Activated T-helper 2 cell treated with anti-CD3 and anti-CD28 coated beads, Interferon-gamma antibody, Interleukin-2, Interleukin-4, amounts not matched to agents 10 μg/mL and 5 μg/mL and 100 μg/mL, durations not matched to agents 14 hours and 24 hours and 36 hours (primary cell): ENCODE measurements at regions of chr18 and their contacts with region 1.

Region 1: GRCh38 chr18:36015629-36016028 is 43.1 kb downstream of the RMP24 start:
- DNase-seq: no peak
- H3K4me3 Mint-ChIP-seq: no peak overlapping the region
- H3K27ac Mint-ChIP-seq: no peak overlapping the region
- H3K4me1 Mint-ChIP-seq: no peaks in the 10 kb centered on the region
- H3K27me3 Mint-ChIP-seq: no peaks in the 10 kb centered on the region

Region 2: DNA sequence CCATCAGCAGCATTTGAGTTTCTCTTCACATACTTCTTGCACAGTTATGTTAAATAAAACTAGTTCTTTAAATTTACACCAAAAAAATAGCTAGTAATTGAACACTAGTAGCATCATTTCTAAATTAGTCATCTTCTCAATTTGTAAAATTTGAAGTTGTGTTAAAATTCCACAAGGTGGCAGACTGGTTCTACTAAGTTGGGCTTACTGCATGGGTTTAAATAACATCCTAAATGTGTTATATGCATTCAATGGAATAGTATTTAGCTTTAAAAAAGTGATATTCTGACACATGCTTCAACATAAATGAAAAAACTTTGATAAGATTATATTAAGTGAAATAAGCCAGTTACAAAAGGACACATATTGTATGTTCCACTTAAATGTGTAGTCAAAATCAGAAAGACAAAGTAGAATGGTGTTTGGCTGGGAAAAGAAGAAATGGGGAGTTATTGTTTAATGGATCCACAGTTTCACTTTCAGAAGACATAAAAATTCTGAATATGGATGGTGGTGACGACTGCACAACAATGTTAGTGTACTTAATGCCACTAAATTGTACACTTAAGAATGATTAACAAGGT is 80.4 kb after region 1 on chr18:
- intact Hi-C with region 1: loop called (anchors 1 kb)
- DNase-seq: no peak
- H3K4me3 Mint-ChIP-seq: no peak overlapping the region
- H3K27ac Mint-ChIP-seq: no peak overlapping the region
- H3K4me1 Mint-ChIP-seq: peaks cover 10% of the 10 kb centered on the region
- H3K27me3 Mint-ChIP-seq: peaks cover 24% of the 10 kb centered on the region

Region 3: DNA sequence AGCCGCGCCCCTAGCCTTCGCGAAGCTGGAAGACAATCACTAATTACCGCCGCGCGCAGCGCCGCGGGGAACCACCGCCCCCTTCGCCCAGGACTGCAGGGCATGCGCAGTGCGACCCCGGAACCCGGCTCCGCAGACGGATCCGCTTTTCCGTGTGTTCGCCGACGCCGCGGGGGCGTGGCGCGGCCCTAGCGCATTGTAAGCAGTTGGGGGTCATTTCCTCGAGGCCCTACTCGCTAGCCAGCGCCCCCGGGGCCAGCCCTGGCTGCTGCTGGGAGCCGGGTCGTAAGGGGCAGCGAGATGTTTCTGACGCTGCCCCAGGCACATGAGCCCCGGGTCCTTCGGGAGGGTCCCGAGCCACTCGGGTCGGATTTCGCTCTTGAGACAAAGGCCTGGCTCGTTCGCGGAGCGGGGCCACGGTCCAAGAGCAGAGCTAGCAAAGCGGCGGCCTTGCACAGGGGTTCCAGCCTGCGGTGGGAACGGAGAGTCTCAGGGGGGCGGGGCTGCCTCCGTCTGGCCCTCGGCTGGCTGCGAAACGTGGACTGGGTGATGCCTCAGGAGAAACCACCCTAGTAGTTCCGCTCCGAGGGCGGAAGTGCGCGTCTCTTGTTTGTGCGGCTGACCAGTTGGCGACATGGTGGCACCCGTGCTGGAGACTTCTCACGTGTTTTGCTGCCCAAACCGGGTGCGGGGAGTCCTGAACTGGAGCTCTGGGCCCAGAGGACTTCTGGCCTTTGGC is 113.8 kb after region 1 on chr18 and contains the starts of genes ELP2 and SLC39A6:
- intact Hi-C with region 1: loop called (anchors 5 kb)
- DNase-seq: peak; percentile 92
- H3K4me3 Mint-ChIP-seq: peak within 1 kb of the TSS; percentile 95
- H3K27ac Mint-ChIP-seq: peak within 1 kb of the TSS; percentile 93
- H3K4me1 Mint-ChIP-seq: peaks cover 47% of the 10 kb centered on the region
- H3K27me3 Mint-ChIP-seq: no peaks in the 10 kb centered on the region
- total RNA-seq, gene ELP2: 93.3 and 94.2 TPM in 2 replicates
- total RNA-seq, gene SLC39A6: 41.7 and 42.7 TPM in 2 replicates

Region 4: DNA sequence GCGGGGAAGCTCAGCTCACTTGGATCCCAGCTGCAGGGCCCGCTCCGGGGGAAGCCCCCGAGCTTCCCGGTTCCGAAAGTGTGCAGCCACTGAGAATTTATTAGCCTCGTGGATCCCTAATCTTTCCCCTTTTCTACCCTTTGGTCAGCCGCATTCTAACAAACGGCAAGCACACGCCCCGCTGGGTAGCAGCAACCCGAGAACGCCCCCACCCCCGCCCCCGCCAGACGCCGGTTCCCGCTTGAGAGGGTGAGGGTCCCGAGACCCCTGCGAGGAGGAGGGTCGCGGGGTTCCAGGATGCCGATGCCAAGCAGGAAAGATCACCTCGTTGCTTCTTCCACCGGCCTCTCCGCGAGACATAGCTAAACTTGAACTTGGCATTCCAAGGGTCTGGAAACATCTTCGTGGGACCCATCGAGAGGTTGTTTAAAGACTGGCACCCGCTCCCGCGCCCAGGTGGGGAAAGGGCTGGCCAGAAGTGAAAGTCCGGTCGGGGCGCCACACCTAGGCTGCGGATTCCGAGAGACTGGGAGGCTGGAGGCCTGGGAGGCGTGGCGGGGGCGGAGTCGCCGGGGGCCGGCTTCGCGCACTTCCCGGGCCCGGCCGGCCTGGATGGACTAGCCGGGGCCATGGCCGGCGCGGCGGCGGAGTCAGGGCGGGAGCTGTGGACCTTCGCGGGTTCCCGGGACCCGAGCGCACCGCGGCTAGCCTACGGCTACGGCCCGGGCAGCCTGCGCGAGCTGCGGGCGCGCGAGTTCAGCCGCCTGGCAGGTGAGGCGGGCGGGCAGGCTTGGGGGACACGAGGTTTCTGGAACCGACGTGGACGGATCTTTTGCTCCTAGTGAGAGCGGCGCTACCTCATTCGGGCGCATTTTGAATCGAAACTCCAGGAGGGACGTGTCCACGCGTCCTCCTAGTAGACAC is 171.5 kb after region 1 on chr18 and contains the start of gene MOCOS:
- intact Hi-C with region 1: loop called (anchors 5 kb)
- DNase-seq: peak; percentile 25
- H3K4me3 Mint-ChIP-seq: peak within 1 kb of the TSS; percentile 78
- H3K27ac Mint-ChIP-seq: no peak within 1 kb of the TSS
- H3K4me1 Mint-ChIP-seq: peaks cover 2% of the 10 kb centered on the region
- H3K27me3 Mint-ChIP-seq: peaks cover 35% of the 10 kb centered on the region
- total RNA-seq, gene MOCOS: 0.16 and 0.25 TPM in 2 replicates

Region 5: GRCh38 chr18:36572135-36572856 is 556.7 kb after region 1 on chr18:
- intact Hi-C with region 1: loop called (anchors 5 kb)
- DNase-seq: no peak
- H3K4me3 Mint-ChIP-seq: no peak overlapping the region
- H3K27ac Mint-ChIP-seq: no peak overlapping the region
- H3K4me1 Mint-ChIP-seq: no peaks in the 10 kb centered on the region
- H3K27me3 Mint-ChIP-seq: peaks cover 15% of the 10 kb centered on the region